ENCODE measurements at regions of chr20 and their contacts with region 1.

Region 1: DNA sequence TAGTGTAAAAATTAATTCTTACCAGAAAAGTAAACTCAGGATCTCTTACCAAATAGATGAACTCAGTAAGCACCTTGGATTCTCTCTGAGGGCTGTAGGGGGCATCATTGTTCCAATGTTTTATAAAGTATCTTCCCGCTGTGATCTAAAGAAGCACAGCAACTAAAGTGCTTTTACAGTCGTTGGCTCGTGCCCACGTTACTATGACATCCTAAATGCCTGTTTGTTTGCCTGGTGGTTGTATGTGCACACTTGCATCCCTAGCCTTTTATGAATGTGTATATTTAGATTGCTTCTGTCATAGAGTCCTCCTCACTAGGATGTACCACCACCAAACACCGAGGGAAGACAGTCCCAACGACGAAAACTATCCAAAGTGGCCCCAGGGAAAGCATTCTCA is 34.5 kb downstream of the SLX4IP start:
- DNase-seq: peak in 3 of 10 donors; percentile 28 to 58 (median 36)
- H3K4me3 ChIP-seq: peak overlapping the region in 8 of 59 donors; percentile 1 to 31 (median 22)
- H3K27ac ChIP-seq: peak overlapping the region in 1 of 59 donors; percentile 36
- H3K27me3 ChIP-seq: no peaks in the 10 kb centered on the region
- CTCF ChIP-seq: peak; percentile 38 to 86 (median 72)

Region 2: DNA sequence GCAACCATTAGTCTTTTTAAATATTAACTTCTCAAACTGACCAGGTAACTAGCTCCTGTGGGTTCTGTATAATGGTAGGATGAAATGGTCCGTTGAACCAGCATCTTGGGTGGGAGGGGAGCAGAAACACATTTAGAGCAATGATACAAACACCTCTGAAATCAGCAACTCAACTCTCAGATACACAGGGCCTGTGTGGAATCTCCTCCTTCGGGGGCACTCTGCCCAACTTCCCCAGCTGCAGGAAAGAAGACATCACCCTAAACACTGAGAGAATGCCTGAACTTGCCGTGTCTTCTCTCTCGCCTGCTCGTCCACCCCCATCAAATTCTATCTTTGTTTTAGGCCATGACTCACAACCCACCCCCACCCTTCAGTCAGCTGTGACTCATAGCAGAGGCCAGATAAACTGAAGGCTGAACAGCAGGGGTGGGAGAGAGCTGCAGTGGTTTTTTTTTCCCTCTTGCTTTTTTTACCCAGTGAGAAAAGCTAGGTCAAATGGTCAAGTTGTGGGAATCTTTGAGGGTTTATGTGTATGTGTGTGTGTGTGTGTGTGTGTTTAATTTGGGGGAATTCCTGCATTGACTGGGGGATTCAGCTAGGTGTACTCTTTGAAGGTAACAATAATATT is 797.6 kb after region 1 on chr20:
- intact Hi-C with region 1: loop called in 1 of 2 experiments (anchors 5 kb)
- DNase-seq: peak in 8 of 10 donors; percentile 46 to 83 (median 67)
- H3K4me3 ChIP-seq: no peak overlapping the region
- H3K27ac ChIP-seq: peak overlapping the region in 47 of 59 donors; percentile 1 to 82 (median 63)
- H3K27me3 ChIP-seq: no peaks in the 10 kb centered on the region
- CTCF ChIP-seq: peak in 7 of 56 donors; percentile 9 to 22 (median 14)